ENCODE measurements at regions of chr5 and their contacts with region 1.

Region 1: GRCh38 chr5:42241636-42242035 is 181.6 kb upstream of the GHR start:
- DNase-seq: no peak
- H3K4me3 ChIP-seq: no peak overlapping the region
- H3K27ac ChIP-seq: no peak overlapping the region
- H3K4me1 ChIP-seq: no peaks in the 10 kb centered on the region
- H3K27me3 ChIP-seq: no peaks in the 10 kb centered on the region
- CTCF ChIP-seq: no peak

Region 2: DNA sequence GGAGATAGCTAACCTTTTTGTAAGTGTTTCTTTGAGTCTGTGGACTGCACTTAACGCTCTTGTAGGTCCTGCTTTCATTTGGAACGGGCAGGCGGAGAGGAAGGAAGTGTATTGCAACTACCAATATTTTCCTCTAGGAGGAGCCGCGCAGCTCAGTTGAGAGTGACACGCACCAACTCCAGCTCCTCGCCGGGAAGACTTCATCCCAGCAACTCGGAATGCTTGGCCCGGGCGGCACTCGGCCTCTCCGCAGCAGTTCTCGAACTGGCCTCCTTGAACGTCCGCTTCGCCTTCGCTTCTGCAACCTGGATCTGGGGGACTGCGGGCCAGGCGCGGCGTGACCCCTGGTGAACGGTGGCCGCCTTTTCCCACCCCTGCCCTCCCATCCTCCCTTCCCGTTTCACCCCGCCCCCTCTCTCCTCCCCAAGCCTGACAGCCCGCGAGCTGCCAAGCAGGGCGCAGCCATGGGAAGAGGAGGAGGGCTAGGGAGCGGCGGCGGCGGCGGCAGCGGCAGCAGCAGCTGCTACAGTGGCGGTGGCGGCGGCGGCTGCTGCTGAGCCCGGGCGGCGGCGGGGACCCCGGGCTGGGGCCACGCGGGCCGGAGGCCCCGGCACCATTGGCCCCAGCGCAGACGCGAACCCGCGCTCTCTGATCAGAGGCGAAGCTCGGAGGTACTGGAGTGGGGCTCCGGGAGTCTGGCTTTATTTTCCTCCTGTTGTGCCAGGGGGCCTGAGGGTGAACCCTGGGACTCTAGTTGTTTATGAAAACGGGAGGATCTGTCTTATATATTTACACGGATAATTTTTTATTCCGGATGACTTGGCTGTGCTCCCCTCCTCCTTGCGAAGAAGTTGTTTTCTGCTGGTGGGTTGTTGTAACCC is 181.9 kb after region 1 on chr5 and contains the start of gene GHR:
- CTCF ChIA-PET with region 1: no interaction called
- POLR2A ChIA-PET with region 1: no interaction called
- intact Hi-C with region 1: no loop called
- DNase-seq: peak in 1 of 2 experiments; percentile 67
- H3K4me3 ChIP-seq: no peak within 1 kb of the TSS
- H3K27ac ChIP-seq: no peak within 1 kb of the TSS
- H3K4me1 ChIP-seq: no peaks in the 10 kb centered on the region
- H3K27me3 ChIP-seq: no peaks in the 10 kb centered on the region
- CTCF ChIP-seq: peak; percentile 30; the same call in 1 of the 2 replicates
- total RNA-seq, gene GHR: not detected in 2 replicates

Region 3: GRCh38 chr5:42620579-42621216 is 379.1 kb after region 1 on chr5:
- CTCF ChIA-PET with region 1: no interaction called
- POLR2A ChIA-PET with region 1: no interaction called
- intact Hi-C with region 1: loop called (anchors 1 kb)
- DNase-seq: no peak
- H3K4me3 ChIP-seq: no peak overlapping the region
- H3K27ac ChIP-seq: no peak overlapping the region
- H3K4me1 ChIP-seq: no peaks in the 10 kb centered on the region
- H3K27me3 ChIP-seq: no peaks in the 10 kb centered on the region
- CTCF ChIP-seq: no peak

Measured in PC-9 (cell line).